ENCODE measurements at regions of chr12 and their contacts with region 1.

Region 1: GRCh38 chr12:70520847-70521246 is 116.4 kb downstream of the PTPRB start:
- DNase-seq: no peak
- H3K4me3 ChIP-seq: no peak overlapping the region
- H3K4me3 Mint-ChIP-seq: no peak overlapping the region
- H3K27ac ChIP-seq: no peak overlapping the region
- H3K27ac Mint-ChIP-seq: no peak overlapping the region
- H3K4me1 ChIP-seq: no peaks in the 10 kb centered on the region
- H3K4me1 Mint-ChIP-seq: no peaks in the 10 kb centered on the region
- H3K27me3 ChIP-seq: no peaks in the 10 kb centered on the region
- H3K27me3 Mint-ChIP-seq: peaks cover 4 to 6% of the 10 kb centered on the region in 2 donors

Region 2: GRCh38 chr12:70049600-70050360 is 471.1 kb before region 1 on chr12:
- CTCF ChIA-PET with region 1: no interaction called
- POLR2A ChIA-PET with region 1: no interaction called
- DNase-seq: peak in 3 of 5 donors; percentile 14 to 55 (median 44)
- H3K4me3 ChIP-seq: no peak overlapping the region
- H3K4me3 Mint-ChIP-seq: peak overlapping the region in 1 of 7 donors; percentile 6
- H3K27ac ChIP-seq: no peak overlapping the region
- H3K27ac Mint-ChIP-seq: peak overlapping the region in 6 of 8 donors; percentile 4 to 87 (median 18)
- H3K4me1 ChIP-seq: peaks cover 4% of the 10 kb centered on the region
- H3K4me1 Mint-ChIP-seq: peaks cover 10 to 22% (median 17%) of the 10 kb centered on the region in 3 donors
- H3K27me3 ChIP-seq: no peaks in the 10 kb centered on the region
- H3K27me3 Mint-ChIP-seq: peaks cover 0 to 3% of the 10 kb centered on the region in 2 donors

Region 3: GRCh38 chr12:70427614-70428013 is 93.2 kb before region 1 on chr12:
- CTCF ChIA-PET with region 1: no interaction called
- POLR2A ChIA-PET with region 1: no interaction called
- DNase-seq: no peak
- H3K4me3 ChIP-seq: no peak overlapping the region
- H3K4me3 Mint-ChIP-seq: no peak overlapping the region
- H3K27ac ChIP-seq: no peak overlapping the region
- H3K27ac Mint-ChIP-seq: no peak overlapping the region
- H3K4me1 ChIP-seq: no peaks in the 10 kb centered on the region
- H3K4me1 Mint-ChIP-seq: no peaks in the 10 kb centered on the region
- H3K27me3 ChIP-seq: no peaks in the 10 kb centered on the region
- H3K27me3 Mint-ChIP-seq: no peaks in the 10 kb centered on the region

Region 4: GRCh38 chr12:70507442-70507841 is 13.4 kb before region 1 on chr12:
- CTCF ChIA-PET with region 1: no interaction called
- POLR2A ChIA-PET with region 1: interaction called, 10 read pairs
- DNase-seq: no peak
- H3K4me3 ChIP-seq: no peak overlapping the region
- H3K4me3 Mint-ChIP-seq: no peak overlapping the region
- H3K27ac ChIP-seq: no peak overlapping the region
- H3K27ac Mint-ChIP-seq: no peak overlapping the region
- H3K4me1 ChIP-seq: no peaks in the 10 kb centered on the region
- H3K4me1 Mint-ChIP-seq: no peaks in the 10 kb centered on the region
- H3K27me3 ChIP-seq: peaks cover 3% of the 10 kb centered on the region
- H3K27me3 Mint-ChIP-seq: peaks cover 2 to 10% of the 10 kb centered on the region in 2 donors

Region 5: DNA sequence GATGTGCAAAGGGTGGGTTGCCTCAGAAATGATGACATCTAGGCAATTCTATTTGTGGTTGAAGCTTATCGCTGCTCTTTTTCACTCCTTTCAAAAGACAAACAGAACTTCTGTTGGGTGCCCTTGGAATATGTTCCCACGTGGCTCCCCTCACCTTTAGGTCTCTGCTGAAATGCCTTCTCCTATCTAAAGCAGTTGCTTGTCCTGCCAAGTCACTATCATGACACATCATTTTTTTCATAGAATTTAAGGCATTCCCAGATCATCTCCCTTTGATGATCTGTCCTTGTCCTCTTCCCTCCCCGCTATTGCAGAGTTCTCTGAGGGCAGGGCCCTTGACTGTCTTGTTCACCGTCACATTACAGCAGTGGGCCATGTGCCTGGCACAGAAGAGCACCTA is 40.7 kb after region 1 on chr12:
- CTCF ChIA-PET with region 1: no interaction called
- POLR2A ChIA-PET with region 1: no interaction called
- DNase-seq: no peak
- H3K4me3 ChIP-seq: no peak overlapping the region
- H3K4me3 Mint-ChIP-seq: no peak overlapping the region
- H3K27ac ChIP-seq: no peak overlapping the region
- H3K27ac Mint-ChIP-seq: no peak overlapping the region
- H3K4me1 ChIP-seq: no peaks in the 10 kb centered on the region
- H3K4me1 Mint-ChIP-seq: no peaks in the 10 kb centered on the region
- H3K27me3 ChIP-seq: no peaks in the 10 kb centered on the region
- H3K27me3 Mint-ChIP-seq: peaks cover 1 to 9% of the 10 kb centered on the region in 2 donors

Measured in CD8-positive, alpha-beta memory T cell (primary cell).